A549 (cell line): ENCODE measurements at regions of chr7 and their contacts with region 1.

Region 1: GRCh38 chr7:151631968-151632749 is 112.5 kb upstream of the RHEB start:
- DNase-seq: peak; percentile 49 to 77
- ATAC-seq: peak; percentile 91
- H3K4me3 ChIP-seq: peak overlapping the region; percentile 91
- H3K27ac ChIP-seq: peak overlapping the region; percentile 94
- H3K4me1 ChIP-seq: peaks cover 27% of the 10 kb centered on the region
- CTCF ChIP-seq: peak; percentile 82
- EP300 ChIP-seq: no peak
- POLR2A ChIP-seq: peak; percentile 46
- RAD21 ChIP-seq: peak; percentile 32 to 62; a peak in 4 of 5 replicates

Region 2: GRCh38 chr7:151503902-151504714 is 128.1 kb before region 1 on chr7:
- CTCF ChIA-PET with region 1: no interaction called
- POLR2A ChIA-PET with region 1: no interaction called
- DNase-seq: peak in 1 of 2 experiments; percentile 78
- ATAC-seq: peak; percentile 89 to 92
- H3K4me3 ChIP-seq: no peak overlapping the region
- H3K27ac ChIP-seq: peak overlapping the region; percentile 68 to 79
- H3K4me1 ChIP-seq: peaks cover 72% of the 10 kb centered on the region
- CTCF ChIP-seq: no peak
- EP300 ChIP-seq: peak; percentile 52 to 54; a peak in 2 of 5 replicates
- POLR2A ChIP-seq: no peak
- RAD21 ChIP-seq: peak in 1 of 2 experiments; percentile 40; a peak in 2 of 5 replicates

Region 3: DNA sequence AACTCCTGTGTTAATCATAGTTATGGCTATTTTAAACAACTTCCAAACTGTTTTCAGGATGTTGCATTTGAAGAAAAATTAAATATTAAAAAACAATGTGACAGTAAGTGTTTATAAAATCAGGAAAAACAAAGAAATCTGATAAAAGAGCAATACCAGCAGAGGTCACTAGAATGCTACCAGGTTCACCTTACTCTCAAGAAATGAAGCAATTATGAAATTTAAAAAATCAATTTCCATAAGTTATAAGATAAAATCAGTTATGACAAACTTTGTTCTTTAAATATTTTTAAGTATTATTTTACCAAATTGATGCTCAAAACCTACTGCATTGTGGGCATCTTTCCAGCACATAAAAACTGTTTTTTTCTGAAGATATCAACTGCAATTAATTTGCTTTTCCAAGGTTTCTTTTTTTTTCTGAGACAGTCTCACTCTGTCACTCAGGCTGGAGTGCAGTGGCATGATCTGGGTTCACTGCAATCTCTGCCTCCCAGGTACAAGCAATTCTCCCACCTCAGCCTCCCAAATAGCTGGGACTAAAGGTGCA is 61.7 kb before region 1 on chr7:
- CTCF ChIA-PET with region 1: interaction called, 17 read pairs
- POLR2A ChIA-PET with region 1: no interaction called
- DNase-seq: peak in 1 of 2 experiments; percentile 25
- ATAC-seq: no peak
- H3K4me3 ChIP-seq: no peak overlapping the region
- H3K27ac ChIP-seq: peak overlapping the region in 1 of 2 experiments; percentile 32; a peak in 1 of 6 replicates
- H3K4me1 ChIP-seq: no peaks in the 10 kb centered on the region; the same call in 2 of the 3 replicates
- CTCF ChIP-seq: peak; percentile 84
- EP300 ChIP-seq: no peak
- POLR2A ChIP-seq: no peak
- RAD21 ChIP-seq: peak; percentile 89 to 91

Region 4: DNA sequence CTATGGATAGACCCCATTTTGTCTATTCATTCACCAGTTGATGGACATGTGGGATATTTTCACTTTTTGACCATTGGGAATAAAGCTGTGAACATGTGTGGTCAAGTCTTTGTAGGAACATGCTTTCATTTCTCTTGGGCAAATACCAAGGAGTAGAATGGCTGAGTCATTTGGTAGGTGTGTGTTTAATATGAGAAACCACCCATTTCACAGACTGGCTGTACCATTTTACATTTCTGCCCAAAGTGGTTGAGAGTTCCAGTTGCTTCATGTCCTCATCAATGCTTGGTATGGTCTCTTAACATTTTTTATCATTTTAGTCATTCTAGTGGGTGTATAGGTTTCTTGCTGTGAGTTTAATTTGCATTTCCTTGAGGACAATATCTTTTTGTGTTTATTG is 12.4 kb after region 1 on chr7:
- CTCF ChIA-PET with region 1: interaction called, 30 read pairs
- POLR2A ChIA-PET with region 1: no interaction called
- DNase-seq: no peak
- ATAC-seq: no peak
- H3K4me3 ChIP-seq: no peak overlapping the region
- H3K27ac ChIP-seq: no peak overlapping the region
- H3K4me1 ChIP-seq: peaks cover 10% of the 10 kb centered on the region
- CTCF ChIP-seq: no peak
- EP300 ChIP-seq: no peak
- POLR2A ChIP-seq: no peak
- RAD21 ChIP-seq: no peak

Region 5: GRCh38 chr7:151657173-151657572 is 25.0 kb after region 1 on chr7:
- CTCF ChIA-PET with region 1: interaction called, 15 read pairs
- POLR2A ChIA-PET with region 1: interaction called, 4 read pairs
- DNase-seq: no peak
- ATAC-seq: no peak
- H3K4me3 ChIP-seq: no peak overlapping the region
- H3K27ac ChIP-seq: no peak overlapping the region
- H3K4me1 ChIP-seq: peaks cover 42% of the 10 kb centered on the region
- CTCF ChIP-seq: no peak
- EP300 ChIP-seq: no peak
- POLR2A ChIP-seq: no peak
- RAD21 ChIP-seq: no peak

Region 6: GRCh38 chr7:151696721-151697514 is 64.8 kb after region 1 on chr7:
- CTCF ChIA-PET with region 1: interaction called, 66 read pairs
- POLR2A ChIA-PET with region 1: interaction called, 4 read pairs
- DNase-seq: peak; percentile 65 to 71
- ATAC-seq: peak; percentile 45 to 77
- H3K4me3 ChIP-seq: no peak overlapping the region
- H3K27ac ChIP-seq: peak overlapping the region; percentile 83 to 89
- H3K4me1 ChIP-seq: peaks cover 70% of the 10 kb centered on the region
- CTCF ChIP-seq: peak; percentile 17; the same call in 2 of the 3 replicates
- EP300 ChIP-seq: no peak; a peak in 1 of 5 replicates
- POLR2A ChIP-seq: no peak
- RAD21 ChIP-seq: peak in 1 of 2 experiments; percentile 17; a peak in 2 of 5 replicates

Region 7: GRCh38 chr7:151744656-151745638 is 112.8 kb after region 1 on chr7:
- CTCF ChIA-PET with region 1: interaction called, 51 read pairs
- POLR2A ChIA-PET with region 1: interaction called, 3 read pairs
- DNase-seq: peak; percentile 92 to 93
- ATAC-seq: peak; percentile 92 to 94
- H3K4me3 ChIP-seq: no peak overlapping the region
- H3K27ac ChIP-seq: peak overlapping the region; percentile 87
- H3K4me1 ChIP-seq: peaks cover 64% of the 10 kb centered on the region
- CTCF ChIP-seq: peak; percentile 51
- EP300 ChIP-seq: peak; percentile 84 to 92; a peak in 3 of 5 replicates
- POLR2A ChIP-seq: no peak
- RAD21 ChIP-seq: peak; percentile 52 to 72